ENCODE measurements at regions of chr15 and their contacts with region 1.

Region 1: GRCh38 chr15:90648137-90649070 is 68.7 kb upstream of the BLM start:
- DNase-seq: peak; percentile 81
- H3K4me3 Mint-ChIP-seq: peak overlapping the region; percentile 53
- H3K27ac Mint-ChIP-seq: peak overlapping the region; percentile 92
- H3K4me1 Mint-ChIP-seq: peaks cover 24% of the 10 kb centered on the region
- H3K27me3 Mint-ChIP-seq: no peaks in the 10 kb centered on the region

Region 2: DNA sequence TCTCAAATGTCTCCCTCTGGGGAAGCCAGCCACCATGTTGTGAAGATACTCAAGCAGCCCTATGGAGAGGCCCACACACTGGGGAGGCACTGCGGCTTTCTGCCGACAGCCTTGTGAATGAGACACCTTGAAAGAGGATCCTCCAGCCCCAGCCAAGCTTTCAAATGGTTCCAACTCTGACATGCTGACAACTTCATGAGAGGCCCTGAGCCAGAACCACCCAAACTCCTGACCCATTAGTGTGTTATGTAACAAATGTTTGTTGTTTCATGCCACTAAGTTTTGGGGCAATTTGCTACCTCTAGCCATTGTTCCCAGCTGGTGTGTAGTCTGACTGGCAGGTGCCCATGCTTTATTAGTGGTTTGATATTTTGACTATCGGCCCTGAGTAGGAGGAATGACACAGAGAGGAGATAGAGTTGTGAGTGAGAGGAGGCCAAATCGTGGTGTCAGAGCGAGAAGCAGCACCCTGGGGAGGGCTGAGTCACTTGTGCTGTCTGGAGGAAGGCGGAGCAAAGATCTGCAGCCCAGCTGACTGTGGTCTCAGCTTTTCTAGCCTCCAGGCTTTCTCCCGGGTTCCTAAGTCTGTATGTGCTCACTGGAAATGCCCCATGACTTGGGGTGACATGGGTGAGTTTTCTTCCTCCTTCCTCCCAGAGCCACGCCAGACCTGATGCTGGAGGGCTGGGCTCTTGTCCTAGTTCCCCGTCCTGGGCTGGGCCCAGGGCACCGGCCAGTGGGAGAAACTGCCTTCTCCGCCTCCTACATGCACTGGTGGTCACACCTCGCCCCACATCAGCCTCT is 12.0 kb after region 1 on chr15:
- CTCF ChIA-PET with region 1: interaction called, 7 read pairs
- POLR2A ChIA-PET with region 1: interaction called, 3 read pairs
- intact Hi-C with region 1: loop called (anchors 1 kb)
- DNase-seq: peak; percentile 88
- H3K4me3 Mint-ChIP-seq: peak overlapping the region; percentile 47
- H3K27ac Mint-ChIP-seq: peak overlapping the region; percentile 16
- H3K4me1 Mint-ChIP-seq: peaks cover 63% of the 10 kb centered on the region
- H3K27me3 Mint-ChIP-seq: peaks cover 54% of the 10 kb centered on the region

Region 3: DNA sequence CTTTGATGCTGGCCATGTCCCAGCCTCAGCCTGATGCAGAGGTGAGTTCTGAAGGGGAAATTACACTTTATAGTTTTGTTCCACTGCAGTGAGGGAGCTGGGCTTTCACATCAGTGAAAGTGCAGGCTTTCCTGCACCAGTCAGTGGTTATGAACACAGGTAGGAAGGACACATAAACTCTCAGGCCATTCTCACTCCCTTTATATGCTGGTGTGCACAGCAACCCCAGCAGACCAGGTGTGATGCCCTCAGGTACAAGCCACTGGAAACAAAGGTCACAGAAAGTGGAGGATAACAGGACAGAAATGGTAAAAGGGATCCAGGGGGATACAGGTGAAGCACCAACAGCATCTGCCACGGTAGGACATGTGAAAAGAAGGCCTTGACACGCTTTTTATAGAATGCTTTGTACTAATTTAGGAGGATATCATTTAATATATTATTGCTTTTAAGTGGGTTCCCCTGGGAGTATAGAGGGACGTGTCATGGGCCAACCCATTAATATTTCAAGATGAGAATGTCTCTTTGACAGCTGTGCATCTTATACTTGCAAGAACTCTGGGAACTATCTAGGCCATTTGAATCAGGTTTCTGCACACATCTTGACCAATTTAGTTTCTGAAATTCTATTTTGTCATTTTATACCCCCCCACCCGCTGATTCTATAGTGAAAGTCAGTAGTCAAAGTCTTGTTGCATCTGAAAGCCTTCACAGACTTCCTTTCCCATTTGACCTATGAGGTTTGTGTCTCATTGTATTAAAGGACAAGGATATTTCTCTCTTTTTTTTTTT is 43.8 kb after region 1 on chr15:
- CTCF ChIA-PET with region 1: interaction called, 29 read pairs
- POLR2A ChIA-PET with region 1: no interaction called
- intact Hi-C with region 1: loop called (anchors 1 kb)
- DNase-seq: no peak
- H3K4me3 Mint-ChIP-seq: no peak overlapping the region
- H3K27ac Mint-ChIP-seq: no peak overlapping the region
- H3K4me1 Mint-ChIP-seq: peaks cover 5% of the 10 kb centered on the region
- H3K27me3 Mint-ChIP-seq: no peaks in the 10 kb centered on the region

Region 4: DNA sequence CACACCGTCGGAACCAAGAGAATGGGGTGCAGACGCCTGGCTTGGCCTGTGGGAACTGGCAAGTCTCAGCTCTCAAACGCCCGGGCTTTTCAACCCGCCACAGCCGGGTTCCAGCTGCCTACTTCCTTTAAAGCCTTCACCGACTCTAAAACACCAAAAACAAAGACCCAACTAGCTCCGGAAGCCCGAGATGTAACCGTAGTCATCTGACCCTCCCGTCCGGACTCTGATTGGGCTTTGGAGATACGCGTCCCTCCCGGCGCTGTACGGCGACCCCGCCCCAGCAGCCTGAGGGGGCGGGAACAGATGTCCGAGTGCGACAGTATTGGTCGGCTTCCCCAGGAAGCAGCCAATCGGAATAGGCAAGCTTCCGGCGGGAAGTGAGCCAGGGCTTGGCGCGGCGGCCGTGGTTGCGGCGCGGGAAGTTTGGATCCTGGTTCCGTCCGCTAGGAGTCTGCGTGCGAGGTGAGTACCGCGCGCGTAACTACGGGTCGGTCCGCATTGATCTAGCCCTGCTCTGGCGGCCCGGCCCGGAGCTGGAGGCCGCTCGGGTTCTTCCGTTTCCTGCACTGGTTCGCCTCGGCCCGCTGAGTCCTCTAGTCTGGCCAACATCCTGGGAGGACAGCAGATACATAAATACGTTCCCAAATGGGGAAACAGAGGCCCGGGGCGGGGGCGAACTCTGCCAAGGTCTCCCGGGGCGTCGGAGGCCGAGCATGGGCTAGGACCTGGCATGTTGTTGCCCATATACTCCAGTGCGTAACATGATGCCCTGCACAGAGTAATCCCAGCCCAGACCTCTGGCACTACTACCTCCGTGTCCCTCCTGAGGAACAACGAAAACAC is 68.8 kb after region 1 on chr15 and contains the start of gene BLM:
- CTCF ChIA-PET with region 1: interaction called, 13 read pairs
- POLR2A ChIA-PET with region 1: no interaction called
- intact Hi-C with region 1: loop called (anchors 1 kb)
- DNase-seq: peak; percentile 97
- H3K4me3 Mint-ChIP-seq: peak within 1 kb of the TSS; percentile 84
- H3K27ac Mint-ChIP-seq: peak within 1 kb of the TSS; percentile 91
- H3K4me1 Mint-ChIP-seq: peaks cover 24% of the 10 kb centered on the region
- H3K27me3 Mint-ChIP-seq: no peaks in the 10 kb centered on the region
- total RNA-seq, gene BLM: 65.6 to 68.7 TPM

Measured in activated CD4-positive, alpha-beta memory T cell treated with anti-CD3 and anti-CD28 coated beads for 36 hours (primary cell).